ENCODE measurements at regions of chr17 and their contacts with region 1.

Region 1: GRCh38 chr17:63998050-63998720 is at the start of gene PRR29:
- DNase-seq: peak in 1 of 2 donors; percentile 63
- H3K4me3 ChIP-seq: peak within 1 kb of the TSS; percentile 38 to 52
- H3K27ac ChIP-seq: no peak within 1 kb of the TSS
- H3K4me1 ChIP-seq: peaks cover 0 to 21% (median 13%) of the 10 kb centered on the region in 4 donors
- H3K27me3 ChIP-seq: peaks cover 0 to 70% of the 10 kb centered on the region in 2 donors
- CTCF ChIP-seq: no peak

Region 2: DNA sequence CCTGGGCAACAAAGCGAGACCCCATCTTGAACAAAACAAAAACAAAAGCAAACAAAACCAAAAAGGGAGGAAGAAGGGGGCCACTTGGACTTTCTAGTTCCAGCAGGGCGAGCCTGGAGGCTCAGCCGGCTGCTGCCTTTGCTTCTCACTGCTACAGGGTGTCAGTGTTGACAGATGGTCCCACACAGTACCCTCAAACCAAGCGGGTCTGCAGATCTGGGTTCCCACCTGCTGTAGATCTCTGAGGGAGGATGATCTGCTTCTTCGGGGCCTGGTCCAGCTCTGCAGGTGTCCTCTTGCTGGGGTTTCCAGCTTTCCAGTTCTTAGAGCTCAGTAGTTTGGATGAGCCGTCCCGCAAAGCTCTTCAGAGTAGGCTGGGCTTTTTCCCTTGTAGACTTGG is 93.9 kb before region 1 on chr17:
- intact Hi-C with region 1: no loop called
- DNase-seq: no peak
- H3K4me3 ChIP-seq: no peak overlapping the region
- H3K27ac ChIP-seq: no peak overlapping the region
- H3K4me1 ChIP-seq: no peaks in the 10 kb centered on the region
- H3K27me3 ChIP-seq: peaks cover 0 to 3% of the 10 kb centered on the region in 2 donors
- CTCF ChIP-seq: no peak

Region 3: GRCh38 chr17:64073771-64074703 is 75.9 kb after region 1 on chr17:
- intact Hi-C with region 1: no loop called
- DNase-seq: no peak
- H3K4me3 ChIP-seq: no peak overlapping the region
- H3K27ac ChIP-seq: no peak overlapping the region
- H3K4me1 ChIP-seq: peaks cover 0 to 3% (median 1%) of the 10 kb centered on the region in 4 donors
- H3K27me3 ChIP-seq: no peaks in the 10 kb centered on the region
- CTCF ChIP-seq: no peak

Region 4: GRCh38 chr17:65756760-65757159 is 1758.6 kb after region 1 on chr17:
- intact Hi-C with region 1: loop called (anchors 5 kb)
- DNase-seq: no peak
- H3K4me3 ChIP-seq: no peak overlapping the region
- H3K27ac ChIP-seq: no peak overlapping the region
- H3K4me1 ChIP-seq: peaks cover 0 to 9% (median 0%) of the 10 kb centered on the region in 4 donors
- H3K27me3 ChIP-seq: no peaks in the 10 kb centered on the region
- CTCF ChIP-seq: no peak

Measured in tibial artery (tissue), 4 donors.